Aorta (tissue), 5 donors: ENCODE measurements at regions of chr3 and their contacts with region 1.

Region 1: DNA sequence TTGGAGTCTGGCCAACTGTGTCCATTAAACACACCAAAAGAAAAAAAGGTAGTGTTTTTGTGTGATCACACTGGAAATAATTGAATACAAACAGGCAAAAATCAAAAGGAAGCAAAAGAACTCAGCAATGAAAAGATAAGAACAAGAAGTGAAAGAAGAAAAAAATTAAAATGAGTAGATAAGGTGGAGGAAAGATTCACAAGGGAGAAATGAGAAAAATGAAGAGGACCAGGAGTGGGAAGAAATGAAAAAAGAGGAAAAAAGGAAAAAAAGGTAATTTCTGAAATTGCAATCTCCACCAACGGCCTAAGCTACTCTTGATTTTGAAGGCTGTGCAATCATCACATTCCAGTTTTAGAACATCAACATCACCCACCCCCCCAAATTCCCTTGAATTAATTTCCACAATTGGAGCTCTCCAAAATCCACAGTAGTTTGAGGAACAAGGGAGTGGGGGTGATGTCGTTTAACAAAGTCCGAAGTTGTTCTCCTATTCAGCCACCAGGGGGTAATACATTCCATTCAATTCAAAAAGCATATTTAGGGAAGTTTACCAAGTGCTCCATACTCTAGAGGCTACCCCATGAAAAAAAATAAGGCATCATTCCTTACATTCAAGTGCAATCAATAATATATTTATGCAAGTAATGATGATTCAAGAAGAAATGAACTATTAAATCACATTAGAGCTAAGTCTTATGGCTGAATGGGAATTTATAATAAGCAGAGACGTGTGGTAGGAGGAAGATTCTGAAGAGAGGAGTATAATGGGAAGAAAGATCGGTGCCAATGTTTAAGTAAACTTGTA is 37.4 kb downstream of the ZNF860 start:
- DNase-seq: no peak
- ATAC-seq: peak; percentile 89
- H3K4me3 ChIP-seq: no peak overlapping the region
- H3K27ac ChIP-seq: no peak overlapping the region
- H3K4me1 ChIP-seq: no peaks in the 10 kb centered on the region
- H3K27me3 ChIP-seq: no peaks in the 10 kb centered on the region

Region 2: GRCh38 chr3:31960793-31961431 is 58.0 kb before region 1 on chr3:
- intact Hi-C with region 1: no loop called
- DNase-seq: no peak
- ATAC-seq: no peak
- H3K4me3 ChIP-seq: no peak overlapping the region
- H3K27ac ChIP-seq: peak overlapping the region; percentile 77 to 86
- H3K4me1 ChIP-seq: peaks cover 6 to 9% of the 10 kb centered on the region in 2 donors
- H3K27me3 ChIP-seq: no peaks in the 10 kb centered on the region

Region 3: DNA sequence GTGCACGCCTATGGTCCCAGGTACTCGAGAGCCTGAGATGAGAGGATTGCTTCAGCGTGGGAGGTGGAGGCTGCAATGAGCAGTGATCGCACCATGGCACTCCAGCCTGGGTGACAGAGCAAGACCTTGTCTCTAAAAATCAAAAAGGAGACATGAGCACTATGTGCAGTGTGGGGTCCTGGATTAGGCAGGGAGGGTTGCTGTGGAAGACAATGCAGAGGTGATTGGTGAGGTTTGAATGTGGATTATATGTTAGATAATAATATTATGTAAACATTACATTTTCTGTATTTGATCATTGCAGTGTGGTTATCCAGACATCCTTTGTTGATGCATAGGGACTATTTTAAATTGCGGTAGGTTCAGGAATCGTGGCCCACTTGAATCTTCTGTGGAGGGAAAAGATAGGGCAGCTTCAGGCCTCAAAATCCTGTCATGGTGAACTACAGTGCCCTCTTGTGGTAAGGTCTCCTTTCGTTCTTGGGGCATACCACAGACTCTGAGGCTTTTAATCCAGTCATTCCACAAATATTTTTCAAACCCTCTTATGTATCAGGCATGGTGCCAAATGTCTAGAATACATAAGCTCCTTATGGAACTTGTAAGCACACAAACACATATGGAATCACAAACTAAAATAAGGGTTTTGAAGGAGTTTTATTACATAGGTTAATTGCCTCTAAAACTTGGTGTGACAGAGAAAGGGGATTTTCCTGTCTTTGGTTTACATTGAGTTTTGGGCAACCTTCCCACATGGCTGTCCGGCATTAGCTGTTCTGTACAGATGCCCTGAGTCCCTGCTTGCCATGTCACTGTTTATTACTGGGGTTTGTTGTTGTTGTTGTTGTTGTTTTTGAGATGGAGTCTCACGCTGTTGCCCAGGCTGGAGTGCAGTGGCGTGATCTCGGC is 125.1 kb after region 1 on chr3:
- intact Hi-C with region 1: loop called (anchors 1 to 2 kb)
- DNase-seq: no peak
- ATAC-seq: peak; percentile 83
- H3K4me3 ChIP-seq: no peak overlapping the region
- H3K27ac ChIP-seq: no peak overlapping the region
- H3K4me1 ChIP-seq: peaks cover 0 to 1% of the 10 kb centered on the region in 2 donors
- H3K27me3 ChIP-seq: no peaks in the 10 kb centered on the region